Vagina (tissue), 2 donors: ENCODE measurements at regions of chr12 and their contacts with region 1.

Region 1: DNA sequence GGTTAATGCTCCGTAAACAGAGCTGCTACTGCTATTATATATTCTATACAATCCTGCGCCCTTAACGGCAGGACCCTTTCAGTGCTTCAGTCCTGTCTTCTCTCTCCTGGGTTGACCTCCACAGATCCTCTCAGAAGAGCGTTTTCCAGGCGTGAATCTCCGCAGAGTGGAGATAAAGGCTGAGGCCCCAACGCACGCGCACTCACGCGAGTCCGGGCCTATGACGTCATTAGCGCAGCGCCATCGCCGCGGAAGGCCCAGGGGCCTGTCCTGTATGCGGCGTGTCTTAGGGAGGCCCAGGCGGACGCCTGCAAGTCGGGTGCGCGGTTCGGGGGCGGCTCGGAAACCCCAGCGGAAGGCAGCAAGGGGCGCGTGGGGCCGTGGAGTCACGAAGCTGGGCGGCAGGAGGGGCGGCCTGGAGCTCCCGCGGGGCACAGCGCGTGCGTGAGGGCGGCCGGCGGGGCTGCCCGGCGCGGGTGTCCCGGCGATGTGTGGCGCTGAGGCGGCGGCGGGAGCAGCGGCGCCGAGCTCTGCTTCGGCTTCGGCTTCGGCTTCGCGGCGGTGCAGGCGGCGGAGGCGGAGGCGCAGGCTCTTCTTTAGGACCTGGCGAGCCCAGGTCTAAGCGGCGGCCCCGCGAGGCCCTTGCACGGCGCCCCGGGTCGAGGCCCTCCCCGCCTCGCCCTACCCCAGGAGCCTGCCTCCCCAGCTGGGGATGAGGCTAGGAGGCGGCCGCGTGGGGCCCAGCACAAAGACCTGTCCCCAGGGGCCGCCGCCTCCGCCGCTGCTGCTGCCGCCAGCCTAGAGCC is at the start of gene MAPKAPK5:
- DNase-seq: peak; percentile 94 to 97
- H3K4me3 ChIP-seq: peak within 1 kb of the TSS; percentile 86 to 93
- H3K27ac ChIP-seq: peak within 1 kb of the TSS; percentile 83
- H3K4me1 ChIP-seq: peaks cover 46% of the 10 kb centered on the region
- H3K27me3 ChIP-seq: no peaks in the 10 kb centered on the region
- CTCF ChIP-seq: peak in 1 of 3 experiments; percentile 5
- POLR2A ChIP-seq: peak in 1 of 2 donors; percentile 30
- total RNA-seq, gene MAPKAPK5: 35.1 TPM

Region 2: GRCh38 chr12:110888256-110888991 is 953.5 kb before region 1 on chr12:
- intact Hi-C with region 1: loop called (anchors 10 kb)
- DNase-seq: no peak
- H3K4me3 ChIP-seq: peak overlapping the region; percentile 40 to 49
- H3K27ac ChIP-seq: no peak overlapping the region
- H3K4me1 ChIP-seq: no peaks in the 10 kb centered on the region
- H3K27me3 ChIP-seq: no peaks in the 10 kb centered on the region
- CTCF ChIP-seq: no peak
- POLR2A ChIP-seq: no peak

Region 3: GRCh38 chr12:111741235-111741812 is 100.6 kb before region 1 on chr12:
- intact Hi-C with region 1: no loop called
- DNase-seq: no peak
- H3K4me3 ChIP-seq: no peak overlapping the region
- H3K27ac ChIP-seq: no peak overlapping the region
- H3K4me1 ChIP-seq: no peaks in the 10 kb centered on the region
- H3K27me3 ChIP-seq: no peaks in the 10 kb centered on the region
- CTCF ChIP-seq: no peak
- POLR2A ChIP-seq: no peak